ENCODE measurements at regions of chr3 and their contacts with region 1.

Region 1: GRCh38 chr3:54951405-54951804 is 23.5 kb upstream of the LRTM1 start:
- DNase-seq: peak; percentile 71 to 75
- ATAC-seq: peak; percentile 91 to 99 (median 96)
- H3K4me3 ChIP-seq: no peak overlapping the region
- H3K27ac ChIP-seq: no peak overlapping the region
- H3K4me1 ChIP-seq: peaks cover 0 to 27% (median 4%) of the 10 kb centered on the region in 9 donors
- H3K27me3 ChIP-seq: no peaks in the 10 kb centered on the region
- CTCF ChIP-seq: peak; percentile 19 to 73 (median 67)

Region 2: GRCh38 chr3:55160241-55160983 is 209.0 kb after region 1 on chr3:
- intact Hi-C with region 1: loop called in 1 of 10 experiments (anchors 5 kb)
- DNase-seq: peak; percentile 12 to 52
- ATAC-seq: peak; percentile 69 to 90 (median 76)
- H3K4me3 ChIP-seq: no peak overlapping the region
- H3K27ac ChIP-seq: peak overlapping the region in 3 of 10 donors; percentile 6 to 70 (median 31)
- H3K4me1 ChIP-seq: peaks cover 0 to 15% (median 0%) of the 10 kb centered on the region in 9 donors
- H3K27me3 ChIP-seq: peaks cover 0 to 16% (median 5%) of the 10 kb centered on the region in 7 donors
- CTCF ChIP-seq: no peak

Region 3: GRCh38 chr3:55169608-55170010 is 218.2 kb after region 1 on chr3:
- intact Hi-C with region 1: loop called in 1 of 10 experiments (anchors 10 kb)
- DNase-seq: no peak
- ATAC-seq: no peak
- H3K4me3 ChIP-seq: no peak overlapping the region
- H3K27ac ChIP-seq: no peak overlapping the region
- H3K4me1 ChIP-seq: no peaks in the 10 kb centered on the region
- H3K27me3 ChIP-seq: peaks cover 0 to 16% (median 0%) of the 10 kb centered on the region in 7 donors
- CTCF ChIP-seq: no peak

Region 4: GRCh38 chr3:55180936-55181535 is 229.6 kb after region 1 on chr3:
- intact Hi-C with region 1: loop called in 5 of 10 experiments (anchors 2 to 10 kb)
- DNase-seq: peak in 1 of 2 donors; percentile 36
- ATAC-seq: no peak
- H3K4me3 ChIP-seq: no peak overlapping the region
- H3K27ac ChIP-seq: no peak overlapping the region
- H3K4me1 ChIP-seq: no peaks in the 10 kb centered on the region
- H3K27me3 ChIP-seq: peaks cover 0 to 18% (median 11%) of the 10 kb centered on the region in 7 donors
- CTCF ChIP-seq: peak; percentile 57 to 83 (median 70)

Region 5: GRCh38 chr3:55721716-55722484 is 770.5 kb after region 1 on chr3:
- intact Hi-C with region 1: loop called in 1 of 10 experiments (anchors 10 kb)
- DNase-seq: peak in 1 of 2 donors; percentile 12
- ATAC-seq: peak in 2 of 8 donors; percentile 17 to 52
- H3K4me3 ChIP-seq: no peak overlapping the region
- H3K27ac ChIP-seq: no peak overlapping the region
- H3K4me1 ChIP-seq: peaks cover 0 to 7% (median 0%) of the 10 kb centered on the region in 9 donors
- H3K27me3 ChIP-seq: peaks cover 0 to 41% (median 11%) of the 10 kb centered on the region in 7 donors
- CTCF ChIP-seq: peak in 7 of 9 donors; percentile 33 to 57 (median 48)

Region 6: GRCh38 chr3:56042326-56042951 is 1091.0 kb after region 1 on chr3:
- intact Hi-C with region 1: loop called in 1 of 10 experiments (anchors 5 kb)
- DNase-seq: no peak
- ATAC-seq: peak in 6 of 8 donors; percentile 57 to 82 (median 64)
- H3K4me3 ChIP-seq: no peak overlapping the region
- H3K27ac ChIP-seq: no peak overlapping the region
- H3K4me1 ChIP-seq: no peaks in the 10 kb centered on the region
- H3K27me3 ChIP-seq: peaks cover 0 to 45% (median 11%) of the 10 kb centered on the region in 7 donors
- CTCF ChIP-seq: peak in 8 of 9 donors; percentile 33 to 66 (median 54)

Region 7: GRCh38 chr3:56251343-56251945 is 1300.0 kb after region 1 on chr3:
- intact Hi-C with region 1: loop called in 1 of 10 experiments (anchors 5 kb)
- DNase-seq: peak in 1 of 2 donors; percentile 32
- ATAC-seq: peak in 1 of 8 donors; percentile 39
- H3K4me3 ChIP-seq: no peak overlapping the region
- H3K27ac ChIP-seq: no peak overlapping the region
- H3K4me1 ChIP-seq: no peaks in the 10 kb centered on the region
- H3K27me3 ChIP-seq: peaks cover 0 to 4% (median 0%) of the 10 kb centered on the region in 7 donors
- CTCF ChIP-seq: peak; percentile 55 to 82 (median 77)